Activated CD4-positive, alpha-beta T cell treated with anti-CD3 and anti-CD28 coated beads for 36 hours (primary cell): ENCODE measurements at regions of chr6 and their contacts with region 1.

Region 1: GRCh38 chr6:136466777-136467176 is 83.4 kb downstream of the MAP7 start:
- DNase-seq: no peak
- ATAC-seq: no peak
- H3K4me3 Mint-ChIP-seq: no peak overlapping the region
- H3K27ac Mint-ChIP-seq: no peak overlapping the region
- H3K4me1 Mint-ChIP-seq: peaks cover 11% of the 10 kb centered on the region
- H3K27me3 Mint-ChIP-seq: peaks cover 2% of the 10 kb centered on the region

Region 2: DNA sequence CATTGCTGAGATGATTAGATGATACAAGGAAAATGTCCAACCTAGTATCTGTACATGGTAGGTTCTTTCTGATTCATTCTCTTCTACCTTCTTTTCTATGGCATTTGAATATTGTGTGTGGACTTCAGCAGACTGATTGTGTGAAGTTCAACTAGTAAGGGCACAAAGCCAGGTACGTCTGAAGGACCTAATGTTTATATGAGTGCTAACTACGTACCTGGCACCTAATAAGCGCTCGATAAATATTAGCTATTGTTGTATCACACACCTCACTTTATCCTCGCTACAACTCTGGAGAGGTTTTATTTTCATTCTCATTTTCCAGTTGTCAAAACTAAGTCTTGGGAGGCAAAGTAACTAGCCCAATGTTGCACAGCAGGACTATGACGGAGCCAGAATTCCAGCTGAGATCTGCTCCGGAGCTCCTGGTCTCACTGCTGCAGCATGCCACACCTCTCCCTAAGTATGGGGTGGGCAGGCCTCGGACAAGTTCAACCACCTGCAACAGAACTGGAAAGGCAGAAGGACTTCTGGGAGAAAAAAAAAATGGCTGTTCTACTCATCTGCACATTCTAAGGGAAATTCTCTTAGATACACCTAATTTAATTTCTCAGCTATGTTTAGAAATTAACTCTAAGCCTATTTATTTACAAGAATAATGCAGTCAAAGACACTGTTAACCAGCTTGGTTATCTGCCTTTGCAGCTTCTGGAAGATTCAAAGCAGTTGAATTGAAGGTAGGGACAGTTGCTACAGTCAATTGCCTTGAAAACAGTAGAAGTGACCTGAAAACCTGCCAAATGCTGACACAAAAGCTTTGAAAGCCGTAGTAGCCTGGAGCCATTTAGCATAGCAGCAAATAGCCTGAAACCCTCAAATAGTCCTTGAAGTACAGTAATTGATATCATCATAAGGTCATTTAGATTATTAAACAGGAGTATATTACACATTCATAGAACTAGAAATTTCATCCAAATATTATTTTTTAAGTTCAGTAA is 450.2 kb before region 1 on chr6:
- CTCF ChIA-PET with region 1: no interaction called
- POLR2A ChIA-PET with region 1: interaction called, 10 read pairs
- intact Hi-C with region 1: no loop called
- DNase-seq: no peak
- ATAC-seq: no peak
- H3K4me3 Mint-ChIP-seq: no peak overlapping the region
- H3K27ac Mint-ChIP-seq: no peak overlapping the region
- H3K4me1 Mint-ChIP-seq: no peaks in the 10 kb centered on the region
- H3K27me3 Mint-ChIP-seq: peaks cover 3% of the 10 kb centered on the region